CD4-positive, alpha-beta memory T cell (primary cell): ENCODE measurements at regions of chr3 and their contacts with region 1.

Region 1: GRCh38 chr3:187223799-187224198 is 26.5 kb downstream of the RTP1 start:
- DNase-seq: no peak
- H3K4me3 ChIP-seq: no peak overlapping the region
- H3K4me3 Mint-ChIP-seq: no peak overlapping the region
- H3K27ac ChIP-seq: no peak overlapping the region
- H3K27ac Mint-ChIP-seq: no peak overlapping the region
- H3K4me1 ChIP-seq: no peaks in the 10 kb centered on the region
- H3K4me1 Mint-ChIP-seq: no peaks in the 10 kb centered on the region
- H3K27me3 ChIP-seq: peaks cover 3% of the 10 kb centered on the region
- H3K27me3 Mint-ChIP-seq: peaks cover 8 to 13% of the 10 kb centered on the region in 2 donors

Region 2: DNA sequence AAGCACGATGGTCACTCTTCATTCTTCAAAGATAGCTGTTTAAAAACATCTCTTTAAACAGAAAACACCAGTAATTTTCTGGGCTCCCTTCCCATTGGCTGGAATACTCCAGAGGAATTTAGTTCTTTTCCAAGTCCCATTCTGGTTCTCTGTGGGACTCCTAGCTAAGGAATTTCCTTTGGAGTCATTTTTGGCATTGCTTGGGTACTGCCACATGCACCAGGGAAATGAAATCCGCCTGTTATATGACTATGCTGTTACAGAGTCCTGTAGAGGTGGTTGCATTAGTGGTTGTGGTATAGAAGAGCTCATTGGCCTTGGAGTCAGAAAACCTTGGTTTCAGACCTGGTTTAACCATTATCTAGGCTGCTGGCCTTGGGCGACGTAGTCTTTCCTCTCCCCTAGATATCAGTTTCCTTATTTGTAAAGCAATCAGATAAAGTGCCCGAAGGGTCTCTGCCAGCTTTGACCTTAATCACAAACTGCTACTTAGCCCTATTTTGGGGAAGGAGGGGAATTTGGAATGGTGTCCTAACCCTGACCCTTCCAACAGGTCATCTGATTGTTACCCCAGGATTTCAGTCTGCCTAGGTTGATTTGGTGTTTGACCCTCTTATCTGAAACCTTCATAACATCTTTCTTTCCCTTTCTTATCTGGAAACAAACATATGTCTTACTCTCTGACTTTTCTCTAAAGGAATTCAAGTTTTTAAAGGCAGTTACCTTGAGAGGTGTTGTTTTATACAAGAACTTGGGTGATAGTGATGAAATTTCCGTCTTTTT is 13.1 kb before region 1 on chr3:
- CTCF ChIA-PET with region 1: interaction called, 15 read pairs
- POLR2A ChIA-PET with region 1: no interaction called
- intact Hi-C with region 1: no loop called
- DNase-seq: no peak
- H3K4me3 ChIP-seq: no peak overlapping the region
- H3K4me3 Mint-ChIP-seq: no peak overlapping the region
- H3K27ac ChIP-seq: no peak overlapping the region
- H3K27ac Mint-ChIP-seq: no peak overlapping the region
- H3K4me1 ChIP-seq: no peaks in the 10 kb centered on the region
- H3K4me1 Mint-ChIP-seq: no peaks in the 10 kb centered on the region
- H3K27me3 ChIP-seq: no peaks in the 10 kb centered on the region
- H3K27me3 Mint-ChIP-seq: peaks cover 2 to 3% of the 10 kb centered on the region in 2 donors

Region 3: GRCh38 chr3:187274977-187275338 is 51.2 kb after region 1 on chr3:
- CTCF ChIA-PET with region 1: no interaction called
- POLR2A ChIA-PET with region 1: no interaction called
- intact Hi-C with region 1: no loop called
- DNase-seq: no peak
- H3K4me3 ChIP-seq: no peak overlapping the region
- H3K4me3 Mint-ChIP-seq: no peak overlapping the region
- H3K27ac ChIP-seq: no peak overlapping the region
- H3K27ac Mint-ChIP-seq: no peak overlapping the region
- H3K4me1 ChIP-seq: no peaks in the 10 kb centered on the region
- H3K4me1 Mint-ChIP-seq: no peaks in the 10 kb centered on the region
- H3K27me3 ChIP-seq: no peaks in the 10 kb centered on the region
- H3K27me3 Mint-ChIP-seq: peaks cover 9 to 13% of the 10 kb centered on the region in 2 donors